Heart left ventricle (tissue), 16 donors: ENCODE measurements at regions of chr6 and their contacts with region 1.

Region 1: DNA sequence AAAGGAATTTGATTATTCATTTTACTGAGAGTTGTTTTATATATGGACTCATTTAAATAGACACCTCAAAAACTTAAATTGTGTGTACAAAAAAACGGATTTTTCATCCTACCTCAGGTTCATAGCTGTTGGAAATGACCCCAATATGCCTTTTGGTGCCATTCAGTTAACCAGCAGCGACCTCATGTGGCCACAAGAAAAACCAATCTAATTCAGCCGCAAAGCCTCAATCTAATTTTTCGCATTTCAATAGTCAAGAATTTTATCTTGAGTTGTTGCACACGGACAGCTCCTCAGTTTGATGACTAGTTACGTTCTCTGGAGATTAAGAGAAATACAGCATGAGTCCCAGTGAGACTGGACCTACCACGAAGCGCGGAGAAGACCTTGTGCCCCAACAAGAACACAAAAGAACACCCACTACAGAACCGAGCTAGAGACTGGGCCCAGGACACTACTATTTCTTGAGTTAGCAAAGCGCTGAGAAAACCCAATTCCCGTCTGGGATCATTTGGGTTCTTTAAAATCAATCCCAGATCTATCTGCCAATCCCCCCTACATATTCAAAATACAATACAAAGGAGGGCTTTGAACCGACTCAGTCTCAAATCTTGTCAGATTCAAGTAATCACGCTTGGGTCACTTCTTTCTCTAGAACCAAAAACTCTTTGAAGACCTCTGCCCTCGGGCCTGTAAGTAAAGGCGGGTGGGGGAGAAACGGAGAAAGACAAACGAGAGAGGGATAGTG is 1.1 kb downstream of the TCP11 start:
- DNase-seq: peak in 3 of 5 donors; percentile 47 to 58 (median 49)
- ATAC-seq: peak in 2 of 4 donors; percentile 53 to 62
- H3K4me3 ChIP-seq: no peak overlapping the region
- H3K27ac ChIP-seq: no peak overlapping the region
- H3K4me1 ChIP-seq: peaks cover 0 to 19% (median 3%) of the 10 kb centered on the region in 12 donors
- H3K27me3 ChIP-seq: peaks cover 0 to 8% (median 0%) of the 10 kb centered on the region in 9 donors
- CTCF ChIP-seq: peak; percentile 73 to 94 (median 85)
- POLR2A ChIP-seq: no peak

Region 2: DNA sequence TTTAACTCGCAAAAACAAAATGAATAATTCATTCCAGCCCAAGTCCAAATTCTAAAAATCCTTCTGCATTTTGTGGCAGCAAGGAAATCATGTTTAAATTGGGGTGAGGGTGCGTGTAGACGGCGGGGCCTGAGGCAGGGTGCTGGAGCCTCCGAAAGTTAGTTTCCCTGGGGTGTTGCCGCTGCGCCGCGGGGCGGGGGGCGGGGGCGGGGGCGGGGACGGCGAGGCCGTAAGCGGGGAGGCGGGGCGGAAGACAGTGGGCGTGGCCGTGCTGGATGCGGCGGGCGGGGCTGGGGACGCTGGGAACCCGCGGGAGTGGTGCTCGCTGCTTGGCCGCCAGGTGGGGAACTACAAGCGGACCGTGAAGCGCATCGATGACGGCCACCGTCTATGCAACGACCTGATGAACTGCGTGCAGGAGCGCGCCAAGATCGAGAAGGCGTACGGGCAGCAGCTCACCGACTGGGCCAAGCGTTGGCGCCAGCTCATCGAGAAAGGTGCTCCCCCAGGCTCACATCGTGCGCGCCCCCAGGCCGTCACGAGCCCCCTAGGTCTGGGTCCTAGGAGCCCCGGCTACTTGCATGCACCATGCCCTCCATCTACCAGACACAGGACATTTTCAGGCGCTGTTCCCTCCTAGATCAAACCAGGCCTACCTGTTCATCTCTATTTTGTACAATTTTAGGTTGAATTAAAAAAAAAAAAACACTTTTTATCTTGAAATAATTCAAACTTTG is 612.9 kb before region 1 on chr6:
- intact Hi-C with region 1: loop called in 1 of 10 experiments (anchors 5 kb)
- DNase-seq: peak; percentile 95 to 98 (median 96)
- ATAC-seq: peak; percentile 86 to 95 (median 92)
- H3K4me3 ChIP-seq: peak overlapping the region in 10 of 12 donors; percentile 7 to 57 (median 40)
- H3K27ac ChIP-seq: peak overlapping the region in 7 of 12 donors; percentile 47 to 66 (median 56)
- H3K4me1 ChIP-seq: peaks cover 0 to 18% (median 8%) of the 10 kb centered on the region in 12 donors
- H3K27me3 ChIP-seq: no peaks in the 10 kb centered on the region
- CTCF ChIP-seq: peak; percentile 56 to 94 (median 78)
- POLR2A ChIP-seq: no peak

Region 3: GRCh38 chr6:34887753-34888513 is 252.1 kb before region 1 on chr6 and contains the start of gene TAF11:
- intact Hi-C with region 1: loop called in 2 of 10 experiments (anchors 10 kb)
- DNase-seq: peak; percentile 94 to 96 (median 95)
- ATAC-seq: peak; percentile 91 to 96 (median 94)
- H3K4me3 ChIP-seq: peak within 1 kb of the TSS; percentile 65 to 95 (median 83)
- H3K27ac ChIP-seq: peak within 1 kb of the TSS; percentile 11 to 93 (median 80)
- H3K4me1 ChIP-seq: peaks cover 0 to 55% (median 24%) of the 10 kb centered on the region in 12 donors
- H3K27me3 ChIP-seq: no peaks in the 10 kb centered on the region
- CTCF ChIP-seq: no peak
- POLR2A ChIP-seq: peak in 1 of 2 donors; percentile 67
- total RNA-seq, gene TAF11: 14.6 to 25.9 (median 19.9) TPM

Region 4: GRCh38 chr6:35076997-35077712 is 62.9 kb before region 1 on chr6:
- intact Hi-C with region 1: loop called in 2 of 10 experiments (anchors 10 kb)
- DNase-seq: peak in 2 of 5 donors; percentile 11 to 28
- ATAC-seq: no peak
- H3K4me3 ChIP-seq: no peak overlapping the region
- H3K27ac ChIP-seq: no peak overlapping the region
- H3K4me1 ChIP-seq: peaks cover 0 to 34% (median 10%) of the 10 kb centered on the region in 12 donors
- H3K27me3 ChIP-seq: no peaks in the 10 kb centered on the region
- CTCF ChIP-seq: no peak
- POLR2A ChIP-seq: no peak